CD4-positive, alpha-beta T cell (primary cell): ENCODE measurements at regions of chr17 and their contacts with region 1.

Region 1: DNA sequence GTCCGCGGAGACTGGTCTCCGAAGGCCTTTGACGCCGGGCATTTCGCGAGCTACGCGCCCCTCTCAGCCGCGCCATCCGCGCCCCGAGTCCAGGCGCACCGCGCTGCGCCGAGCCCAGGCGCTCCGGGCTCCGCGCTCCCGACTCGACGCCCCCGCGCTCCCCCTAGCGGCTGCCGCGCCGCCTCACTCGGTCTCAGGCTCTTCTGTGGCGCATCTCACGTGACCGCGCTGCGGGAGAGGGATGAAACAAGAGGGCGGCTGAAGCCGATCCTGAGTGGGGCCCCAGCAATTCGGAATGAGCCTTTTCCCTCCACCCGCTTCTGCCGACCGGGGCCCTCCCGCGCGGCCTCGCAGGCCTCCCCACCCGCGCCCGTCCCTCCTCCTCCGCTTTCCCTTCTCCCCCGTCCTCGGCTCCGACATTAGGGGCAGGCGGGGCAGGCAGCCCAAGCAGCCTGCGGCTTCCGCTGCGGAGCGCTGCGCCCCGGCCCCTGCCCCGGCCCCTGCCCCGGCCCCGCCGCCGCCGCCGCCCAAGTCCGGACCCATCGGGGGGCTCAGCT is 42.5 kb upstream of the AMZ2 start:
- DNase-seq: peak; percentile 82 to 96 (median 92)
- ATAC-seq: peak; percentile 73
- H3K4me3 ChIP-seq: peak overlapping the region; percentile 70
- H3K4me3 Mint-ChIP-seq: peak overlapping the region; percentile 94
- H3K27ac ChIP-seq: peak overlapping the region; percentile 58 to 76
- H3K27ac Mint-ChIP-seq: peak overlapping the region; percentile 84
- H3K4me1 ChIP-seq: peaks cover 33% of the 10 kb centered on the region
- H3K4me1 Mint-ChIP-seq: peaks cover 36% of the 10 kb centered on the region
- H3K27me3 ChIP-seq: no peaks in the 10 kb centered on the region
- H3K27me3 Mint-ChIP-seq: peaks cover 5% of the 10 kb centered on the region
- CTCF ChIP-seq: peak; percentile 87

Region 2: DNA sequence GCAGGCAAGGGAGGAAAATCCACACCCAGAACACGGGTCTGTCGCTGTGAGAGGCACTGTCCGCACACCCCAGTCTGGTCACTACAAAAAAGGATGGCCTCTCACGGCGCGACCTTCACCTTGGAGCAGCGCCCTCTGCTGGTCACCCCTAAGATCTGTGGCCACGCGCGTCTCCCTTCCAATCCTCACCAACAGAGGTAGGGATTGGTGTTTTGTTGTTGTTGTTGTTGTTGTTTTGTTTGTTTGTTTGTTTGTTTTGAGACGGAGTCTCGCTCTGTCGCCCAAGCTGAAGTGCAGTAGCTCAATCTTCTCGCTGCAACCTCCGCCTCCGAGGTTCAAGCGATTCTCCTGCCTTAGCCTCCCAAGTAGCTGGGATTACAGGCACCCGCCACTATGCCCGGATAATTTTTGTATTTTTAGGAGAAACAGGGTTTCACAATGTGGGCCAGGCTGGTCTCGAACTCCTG is 194.1 kb before region 1 on chr17:
- CTCF ChIA-PET with region 1: no interaction called
- POLR2A ChIA-PET with region 1: no interaction called
- intact Hi-C with region 1: no loop called
- DNase-seq: peak; percentile 31 to 80 (median 46)
- ATAC-seq: peak; percentile 78
- H3K4me3 ChIP-seq: peak overlapping the region; percentile 30
- H3K4me3 Mint-ChIP-seq: peak overlapping the region; percentile 14
- H3K27ac ChIP-seq: no peak overlapping the region
- H3K27ac Mint-ChIP-seq: no peak overlapping the region
- H3K4me1 ChIP-seq: peaks cover 8% of the 10 kb centered on the region
- H3K4me1 Mint-ChIP-seq: peaks cover 11% of the 10 kb centered on the region
- H3K27me3 ChIP-seq: no peaks in the 10 kb centered on the region
- H3K27me3 Mint-ChIP-seq: no peaks in the 10 kb centered on the region
- CTCF ChIP-seq: peak; percentile 85

Region 3: DNA sequence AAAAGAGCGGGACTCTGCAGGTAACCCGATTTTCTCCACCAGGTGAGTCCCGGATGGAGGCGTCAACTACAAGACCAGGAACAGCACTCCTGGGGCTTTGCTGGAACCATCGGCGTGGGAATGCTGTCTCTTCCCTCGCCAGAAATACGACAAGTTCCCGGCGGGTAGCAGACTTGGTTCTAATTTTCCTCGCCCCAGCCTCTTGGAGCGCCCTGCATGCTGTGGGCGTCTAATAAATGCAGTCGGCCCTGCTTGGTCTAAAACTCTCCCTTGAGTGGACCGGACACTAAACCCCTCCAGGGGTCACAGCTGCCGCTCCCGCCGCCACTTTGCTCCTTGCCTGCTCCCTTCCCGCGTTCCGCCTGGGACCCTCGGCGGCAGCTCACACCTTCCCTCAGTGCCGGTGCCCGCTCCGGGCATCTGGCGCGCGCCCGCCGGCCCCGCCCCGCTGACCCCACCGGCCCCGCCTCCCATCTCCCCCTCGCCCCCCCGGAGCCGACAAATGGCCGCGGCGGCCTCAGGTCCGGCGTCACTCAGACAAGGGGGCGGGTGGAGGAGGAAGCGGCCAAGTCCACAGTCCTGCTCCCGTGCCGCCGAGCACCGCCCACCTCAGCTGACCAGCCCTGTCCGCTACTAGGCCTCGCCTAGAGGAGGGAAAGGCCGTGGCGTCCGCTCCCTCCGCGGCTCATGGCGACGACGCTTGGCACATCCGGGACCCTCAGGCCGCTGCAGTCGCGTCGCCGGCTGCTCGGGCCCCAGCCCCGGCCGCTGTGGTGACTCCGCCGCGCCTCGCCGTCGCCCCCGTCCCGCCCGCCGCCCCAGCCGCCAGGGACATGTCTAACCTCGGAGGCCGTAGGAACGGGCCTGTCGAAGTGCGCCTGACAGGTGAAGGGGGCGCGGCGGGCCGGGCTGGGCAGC is 104.0 kb before region 1 on chr17:
- CTCF ChIA-PET with region 1: interaction called, 3 read pairs
- POLR2A ChIA-PET with region 1: no interaction called
- intact Hi-C with region 1: loop called in 1 of 2 experiments (anchors 10 kb)
- DNase-seq: peak; percentile 26 to 83 (median 62)
- ATAC-seq: peak; percentile 47
- H3K4me3 ChIP-seq: peak overlapping the region; percentile 72
- H3K4me3 Mint-ChIP-seq: peak overlapping the region; percentile 99
- H3K27ac ChIP-seq: peak overlapping the region; percentile 65 to 80
- H3K27ac Mint-ChIP-seq: peak overlapping the region; percentile 94
- H3K4me1 ChIP-seq: peaks cover 16% of the 10 kb centered on the region
- H3K4me1 Mint-ChIP-seq: peaks cover 40% of the 10 kb centered on the region
- H3K27me3 ChIP-seq: no peaks in the 10 kb centered on the region
- H3K27me3 Mint-ChIP-seq: no peaks in the 10 kb centered on the region
- CTCF ChIP-seq: no peak

Region 4: DNA sequence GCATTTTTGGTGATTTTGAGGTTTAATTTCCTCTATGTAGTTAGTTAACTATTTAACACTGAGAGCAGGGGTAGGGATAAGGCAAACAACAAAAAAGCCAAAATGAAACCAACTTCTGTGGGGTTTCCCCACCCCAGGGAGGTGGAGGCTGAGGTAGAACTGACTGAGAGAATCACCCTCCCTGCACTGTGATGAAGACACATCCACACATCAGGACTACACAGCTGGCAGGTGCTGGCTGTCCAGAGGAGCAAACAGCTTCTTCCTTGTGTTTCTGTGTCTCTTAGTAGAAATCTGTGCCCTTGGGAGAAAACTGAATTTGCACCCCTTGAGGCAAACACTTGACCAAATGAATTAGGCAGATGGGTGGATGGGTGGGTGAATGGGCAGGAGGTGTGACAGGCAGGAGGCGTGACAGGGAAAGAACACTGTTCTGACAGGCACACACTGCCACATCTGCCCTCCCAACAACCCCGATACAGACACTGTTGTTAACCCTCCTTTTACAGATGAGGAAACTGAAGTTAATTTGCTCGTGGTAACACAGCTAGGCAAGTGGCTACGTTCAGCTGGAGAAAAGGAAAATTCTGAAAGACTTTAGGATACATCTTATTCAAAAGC is 20.4 kb before region 1 on chr17:
- CTCF ChIA-PET with region 1: interaction called, 58 read pairs
- POLR2A ChIA-PET with region 1: interaction called, 119 read pairs
- intact Hi-C with region 1: loop called in 1 of 2 experiments (anchors 2 kb)
- DNase-seq: peak in 12 of 14 experiments; percentile 32 to 87 (median 49)
- ATAC-seq: peak; percentile 63
- H3K4me3 ChIP-seq: peak overlapping the region; percentile 65
- H3K4me3 Mint-ChIP-seq: peak overlapping the region; percentile 74
- H3K27ac ChIP-seq: peak overlapping the region; percentile 67 to 76
- H3K27ac Mint-ChIP-seq: peak overlapping the region; percentile 83
- H3K4me1 ChIP-seq: peaks cover 62% of the 10 kb centered on the region
- H3K4me1 Mint-ChIP-seq: peaks cover 60% of the 10 kb centered on the region
- H3K27me3 ChIP-seq: no peaks in the 10 kb centered on the region
- H3K27me3 Mint-ChIP-seq: no peaks in the 10 kb centered on the region
- CTCF ChIP-seq: no peak

Region 5: GRCh38 chr17:68238164-68238872 is 33.0 kb after region 1 on chr17:
- CTCF ChIA-PET with region 1: interaction called, 3 read pairs
- POLR2A ChIA-PET with region 1: interaction called, 22 read pairs
- intact Hi-C with region 1: no loop called
- DNase-seq: peak in 5 of 14 experiments; percentile 26 to 86 (median 51)
- ATAC-seq: peak; percentile 8
- H3K4me3 ChIP-seq: peak overlapping the region; percentile 39
- H3K4me3 Mint-ChIP-seq: peak overlapping the region; percentile 83
- H3K27ac ChIP-seq: peak overlapping the region; percentile 74 to 84
- H3K27ac Mint-ChIP-seq: peak overlapping the region; percentile 95
- H3K4me1 ChIP-seq: peaks cover 48% of the 10 kb centered on the region
- H3K4me1 Mint-ChIP-seq: peaks cover 48% of the 10 kb centered on the region
- H3K27me3 ChIP-seq: no peaks in the 10 kb centered on the region
- H3K27me3 Mint-ChIP-seq: no peaks in the 10 kb centered on the region
- CTCF ChIP-seq: no peak

Region 6: GRCh38 chr17:68457539-68458259 is 252.4 kb after region 1 on chr17:
- CTCF ChIA-PET with region 1: interaction called, 5 read pairs
- POLR2A ChIA-PET with region 1: interaction called, 19 read pairs
- intact Hi-C with region 1: loop called in 1 of 2 experiments (anchors 10 kb)
- DNase-seq: peak; percentile 95 to 99 (median 98)
- ATAC-seq: peak; percentile 93
- H3K4me3 ChIP-seq: peak overlapping the region; percentile 77
- H3K4me3 Mint-ChIP-seq: peak overlapping the region; percentile 82
- H3K27ac ChIP-seq: peak overlapping the region; percentile 43 to 59
- H3K27ac Mint-ChIP-seq: peak overlapping the region; percentile 81
- H3K4me1 ChIP-seq: peaks cover 50% of the 10 kb centered on the region
- H3K4me1 Mint-ChIP-seq: peaks cover 51% of the 10 kb centered on the region
- H3K27me3 ChIP-seq: no peaks in the 10 kb centered on the region
- H3K27me3 Mint-ChIP-seq: no peaks in the 10 kb centered on the region
- CTCF ChIP-seq: no peak